ENCODE measurements at regions of chr3 and their contacts with region 1.

Region 1: DNA sequence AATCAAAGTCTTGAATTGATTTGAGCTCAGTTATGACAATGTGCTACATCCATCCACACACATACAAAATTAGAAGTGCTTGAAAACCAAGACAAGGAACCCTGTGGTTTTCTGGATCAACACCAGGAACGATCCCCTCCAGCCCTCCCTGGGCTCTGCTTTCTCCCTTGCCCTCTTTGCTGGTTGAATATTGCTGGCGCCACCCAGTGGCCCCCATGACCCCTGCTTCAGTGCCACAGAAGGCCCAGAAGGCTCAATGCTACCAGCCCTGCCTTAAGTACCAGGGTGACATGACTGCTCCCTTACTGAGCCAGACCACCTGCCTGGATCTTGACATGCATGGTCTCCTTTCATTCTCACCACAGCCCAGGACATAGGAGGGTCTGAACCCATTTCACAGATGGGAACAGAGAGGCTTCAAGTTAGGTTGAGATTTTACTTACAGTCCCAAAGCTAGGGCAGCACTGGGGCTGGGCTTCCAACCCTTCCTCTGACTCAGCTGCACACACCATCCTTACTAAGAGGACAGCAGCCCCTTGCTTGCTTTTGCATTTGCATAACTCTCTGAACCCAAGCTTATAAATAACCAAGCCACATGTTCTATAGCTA is 15.0 kb downstream of the IL12A start:
- DNase-seq: peak; percentile 60 to 69
- ATAC-seq: peak; percentile 87 to 95
- H3K4me3 ChIP-seq: no peak overlapping the region
- H3K27ac ChIP-seq: no peak overlapping the region; a peak in 1 of 6 replicates
- H3K4me1 ChIP-seq: no peaks in the 10 kb centered on the region; the same call in 2 of the 3 replicates
- CTCF ChIP-seq: peak; percentile 79
- EP300 ChIP-seq: no peak
- POLR2A ChIP-seq: no peak
- RAD21 ChIP-seq: peak; percentile 76 to 82

Region 2: DNA sequence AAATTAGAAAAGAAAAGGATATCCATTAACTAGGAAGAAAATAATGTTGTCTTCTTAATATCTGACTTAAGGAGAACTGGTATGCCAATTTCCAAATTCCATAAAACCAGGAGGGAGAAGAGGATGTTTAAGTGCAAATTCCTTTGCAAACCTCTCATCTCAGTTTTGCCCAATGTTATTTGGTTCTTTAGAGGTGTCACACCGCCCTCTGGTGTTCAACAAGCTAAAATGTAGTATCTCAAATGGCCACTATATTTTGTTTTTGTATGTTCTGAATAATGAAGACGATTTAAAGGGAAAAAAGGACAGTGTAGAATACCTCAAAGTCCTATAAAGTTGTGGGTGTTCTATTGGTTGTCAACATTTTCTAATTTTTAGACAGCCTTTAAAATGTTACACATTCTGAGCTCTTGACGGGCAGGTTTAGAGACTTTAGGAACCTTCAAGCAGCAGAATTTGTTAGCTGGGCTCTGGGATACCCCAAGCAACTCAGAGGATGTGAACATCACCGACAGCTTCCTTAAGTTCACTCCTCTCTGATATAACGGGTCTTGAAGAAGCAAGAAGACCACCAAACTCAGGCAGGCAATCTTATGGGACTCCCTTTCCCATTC is 743.5 kb before region 1 on chr3:
- CTCF ChIA-PET with region 1: interaction called, 35 read pairs
- POLR2A ChIA-PET with region 1: no interaction called
- DNase-seq: peak; percentile 19 to 65
- ATAC-seq: peak; percentile 57 to 82; a peak in 4 of 6 replicates
- H3K4me3 ChIP-seq: no peak overlapping the region
- H3K27ac ChIP-seq: no peak overlapping the region
- H3K4me1 ChIP-seq: no peaks in the 10 kb centered on the region
- CTCF ChIP-seq: peak; percentile 86
- EP300 ChIP-seq: no peak
- POLR2A ChIP-seq: no peak
- RAD21 ChIP-seq: peak; percentile 90 to 92

Region 3: GRCh38 chr3:159804726-159805410 is 198.8 kb before region 1 on chr3:
- CTCF ChIA-PET with region 1: interaction called, 32 read pairs
- POLR2A ChIA-PET with region 1: no interaction called
- DNase-seq: peak; percentile 77 to 88
- ATAC-seq: peak; percentile 96 to 99
- H3K4me3 ChIP-seq: no peak overlapping the region
- H3K27ac ChIP-seq: peak overlapping the region in 1 of 2 experiments; percentile 57; a peak in 1 of 6 replicates
- H3K4me1 ChIP-seq: peaks cover 14% of the 10 kb centered on the region
- CTCF ChIP-seq: peak; percentile 96
- EP300 ChIP-seq: no peak
- POLR2A ChIP-seq: no peak
- RAD21 ChIP-seq: peak; percentile 98 to 99

Region 4: GRCh38 chr3:159872374-159873109 is 131.1 kb before region 1 on chr3:
- CTCF ChIA-PET with region 1: interaction called, 11 read pairs
- POLR2A ChIA-PET with region 1: no interaction called
- DNase-seq: peak; percentile 83 to 84
- ATAC-seq: peak; percentile 97 to 98
- H3K4me3 ChIP-seq: no peak overlapping the region
- H3K27ac ChIP-seq: peak overlapping the region; percentile 77 to 81
- H3K4me1 ChIP-seq: peaks cover 37% of the 10 kb centered on the region
- CTCF ChIP-seq: no peak
- EP300 ChIP-seq: peak; percentile 52 to 64; a peak in 2 of 5 replicates
- POLR2A ChIP-seq: no peak
- RAD21 ChIP-seq: no peak; a peak in 1 of 5 replicates

Region 5: GRCh38 chr3:159964166-159964973 is 39.3 kb before region 1 on chr3:
- CTCF ChIA-PET with region 1: interaction called, 11 read pairs
- POLR2A ChIA-PET with region 1: no interaction called
- DNase-seq: peak; percentile 73 to 80
- ATAC-seq: peak; percentile 98 to 99
- H3K4me3 ChIP-seq: no peak overlapping the region
- H3K27ac ChIP-seq: peak overlapping the region; percentile 53 to 66
- H3K4me1 ChIP-seq: peaks cover 22% of the 10 kb centered on the region
- CTCF ChIP-seq: no peak
- EP300 ChIP-seq: no peak
- POLR2A ChIP-seq: no peak
- RAD21 ChIP-seq: no peak

Region 6: DNA sequence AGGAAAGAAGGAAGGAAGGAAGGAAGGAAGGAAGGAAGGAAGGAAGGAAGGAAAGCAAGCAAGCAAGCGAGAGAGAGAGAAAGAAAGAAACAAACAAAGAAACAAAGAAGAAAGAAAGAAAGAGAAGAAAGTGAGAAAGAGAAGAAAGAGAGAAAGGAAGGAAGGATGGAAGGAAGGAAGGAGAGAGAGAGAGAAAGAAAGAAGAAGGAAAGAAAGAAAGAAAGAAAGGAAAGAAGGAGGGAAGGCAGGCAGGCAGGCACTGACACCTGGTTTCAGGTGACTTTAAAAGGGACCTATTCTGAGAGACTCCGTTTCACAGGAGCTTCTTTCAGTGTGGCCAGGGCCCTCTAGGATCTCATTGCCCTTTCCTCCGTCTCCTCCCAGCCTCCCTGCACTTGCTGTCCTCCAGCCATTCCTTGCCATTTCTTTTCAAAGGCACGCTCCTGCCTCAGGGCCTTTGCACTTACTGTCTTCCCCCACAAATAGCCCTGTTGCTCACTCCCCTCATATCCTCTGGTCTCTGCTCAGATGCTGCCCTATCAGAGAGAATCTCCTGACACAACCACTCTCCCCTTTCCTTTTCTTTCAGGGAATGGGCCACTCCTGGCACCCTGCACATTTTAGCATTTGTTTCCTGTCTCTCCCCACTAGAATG is 16.6 kb after region 1 on chr3:
- CTCF ChIA-PET with region 1: interaction called, 19 read pairs
- POLR2A ChIA-PET with region 1: no interaction called
- DNase-seq: no peak
- ATAC-seq: no peak
- H3K4me3 ChIP-seq: no peak overlapping the region
- H3K27ac ChIP-seq: no peak overlapping the region
- H3K4me1 ChIP-seq: 0 out of 3 replicates have a peak, but pooled peaks cover 9% of the 10 kb centered on the region
- CTCF ChIP-seq: no peak
- EP300 ChIP-seq: no peak
- POLR2A ChIP-seq: no peak
- RAD21 ChIP-seq: no peak

Region 7: DNA sequence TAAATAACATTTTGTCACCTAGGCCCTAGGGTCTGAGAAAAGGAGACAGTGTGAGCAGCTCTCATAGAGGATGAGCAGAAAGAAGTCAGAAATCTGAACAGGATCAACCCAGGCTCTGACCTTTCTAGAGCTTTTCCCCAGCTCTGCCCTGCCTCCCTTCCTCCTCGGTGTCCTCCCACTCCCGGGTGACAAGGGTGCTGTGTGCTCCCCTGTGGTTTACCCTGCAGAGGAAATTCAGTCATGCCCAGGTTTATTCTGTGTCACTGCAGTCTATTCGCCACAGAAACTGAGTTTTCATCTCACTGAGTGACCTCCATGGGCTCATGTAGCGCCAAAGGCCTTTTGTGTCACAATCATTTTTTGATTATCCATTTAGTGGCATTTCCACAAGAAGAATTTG is 61.7 kb after region 1 on chr3:
- CTCF ChIA-PET with region 1: no interaction called
- POLR2A ChIA-PET with region 1: no interaction called
- DNase-seq: no peak
- ATAC-seq: no peak
- H3K4me3 ChIP-seq: no peak overlapping the region
- H3K27ac ChIP-seq: no peak overlapping the region
- H3K4me1 ChIP-seq: no peaks in the 10 kb centered on the region
- CTCF ChIP-seq: no peak
- EP300 ChIP-seq: no peak
- POLR2A ChIP-seq: no peak
- RAD21 ChIP-seq: no peak

Region 8: DNA sequence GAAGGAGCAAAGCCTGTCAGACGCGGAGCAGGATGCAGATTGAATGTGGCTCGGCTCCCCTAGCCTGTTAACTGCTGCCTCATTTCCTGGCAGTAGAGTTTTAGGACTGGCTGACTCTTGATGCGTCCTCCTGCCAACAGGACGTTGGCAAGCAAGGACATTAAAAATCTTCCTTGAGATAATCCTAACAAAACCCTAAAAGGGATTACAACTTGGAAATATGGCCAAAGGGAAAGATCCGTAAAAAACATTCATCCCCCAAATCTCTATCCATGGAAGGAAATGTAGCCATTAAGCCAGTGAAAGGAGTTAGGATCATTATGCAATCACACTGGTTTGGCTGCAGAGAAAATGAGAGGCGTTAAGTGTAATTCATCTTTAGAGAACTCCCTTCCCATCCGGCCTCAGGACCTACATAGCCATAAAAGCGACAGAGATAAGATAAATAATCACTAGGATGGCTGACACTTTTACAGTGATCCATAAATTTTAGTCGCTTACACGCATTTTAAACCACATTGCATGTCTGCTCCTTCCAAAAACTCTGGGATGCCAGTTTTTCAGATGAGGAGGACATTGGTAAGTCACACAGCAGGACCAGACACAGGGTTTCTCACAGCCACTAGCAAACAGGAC is 177.1 kb after region 1 on chr3:
- CTCF ChIA-PET with region 1: no interaction called
- POLR2A ChIA-PET with region 1: no interaction called
- DNase-seq: no peak
- ATAC-seq: no peak
- H3K4me3 ChIP-seq: no peak overlapping the region
- H3K27ac ChIP-seq: no peak overlapping the region
- H3K4me1 ChIP-seq: 0 out of 3 replicates have a peak, but pooled peaks cover 6% of the 10 kb centered on the region
- CTCF ChIP-seq: no peak
- EP300 ChIP-seq: no peak
- POLR2A ChIP-seq: no peak
- RAD21 ChIP-seq: no peak

Measured in A549 (cell line).